Activated CD4-positive, alpha-beta T cell treated with anti-CD3 and anti-CD28 coated beads for 36 hours (primary cell): ENCODE measurements at regions of chr21 and their contacts with region 1.

Region 1: DNA sequence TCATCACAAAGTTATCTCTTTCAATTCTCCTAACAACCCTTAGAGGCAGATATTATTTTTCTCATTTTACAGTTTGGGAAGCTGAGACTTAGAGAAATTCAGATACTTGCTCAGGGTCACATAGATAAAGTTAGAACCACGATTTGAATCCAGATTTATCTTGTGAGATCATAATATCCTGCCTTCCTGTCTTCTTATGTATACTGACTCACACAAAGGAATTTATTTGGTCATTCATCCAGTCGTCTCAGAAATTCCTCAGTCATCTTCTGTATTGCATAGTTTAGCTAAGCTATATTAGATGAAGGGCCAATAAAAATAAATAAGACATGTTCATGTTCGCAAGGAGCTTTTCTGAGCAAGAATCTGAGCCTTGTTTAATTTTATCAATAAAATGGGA is 35.8 kb upstream of the RUNX1 start:
- DNase-seq: no peak
- ATAC-seq: no peak
- H3K4me3 Mint-ChIP-seq: no peak overlapping the region
- H3K27ac Mint-ChIP-seq: no peak overlapping the region
- H3K4me1 Mint-ChIP-seq: peaks cover 44% of the 10 kb centered on the region
- H3K27me3 Mint-ChIP-seq: no peaks in the 10 kb centered on the region

Region 2: DNA sequence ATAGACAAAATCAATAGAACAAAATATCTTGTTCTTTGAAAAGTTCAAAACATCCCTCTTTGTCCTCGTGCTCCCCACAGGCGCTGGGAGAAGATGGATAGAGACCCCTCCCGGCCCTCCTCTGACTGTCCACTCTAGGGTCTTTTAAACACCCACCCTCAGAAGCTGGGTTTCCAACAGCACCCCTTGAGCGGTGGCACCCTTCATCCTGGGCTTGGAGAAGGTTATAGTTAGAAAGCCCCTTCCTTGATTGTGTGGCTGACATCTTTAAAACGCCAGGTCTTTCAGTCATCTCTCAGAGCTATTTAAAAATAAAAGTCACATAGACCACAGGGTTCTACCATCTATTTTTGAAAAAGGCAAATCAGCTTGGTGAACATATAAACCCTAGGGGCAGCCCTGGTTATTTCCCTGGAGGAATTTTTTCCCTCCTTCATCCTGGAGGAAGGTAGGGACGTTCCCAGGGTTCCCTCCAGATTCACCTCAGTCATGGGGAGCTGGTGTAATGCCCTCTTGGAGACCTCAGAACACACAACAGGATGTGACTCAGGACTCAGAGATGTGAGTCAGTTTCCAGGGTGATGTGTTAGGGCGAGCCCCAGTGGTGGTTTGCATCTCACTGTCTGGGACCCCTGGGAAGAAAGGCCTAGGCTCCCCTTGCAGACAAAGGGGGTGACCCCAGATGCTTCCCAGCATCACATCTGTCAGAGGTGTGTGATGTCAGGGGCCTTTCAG is 277.6 kb before region 1 on chr21:
- CTCF ChIA-PET with region 1: interaction called, 3 read pairs
- POLR2A ChIA-PET with region 1: interaction called, 3 read pairs
- intact Hi-C with region 1: loop called in 1 of 2 experiments (anchors 1 kb)
- DNase-seq: peak; percentile 83
- ATAC-seq: peak; percentile 92
- H3K4me3 Mint-ChIP-seq: no peak overlapping the region
- H3K27ac Mint-ChIP-seq: peak overlapping the region; percentile 87
- H3K4me1 Mint-ChIP-seq: peaks cover 90% of the 10 kb centered on the region
- H3K27me3 Mint-ChIP-seq: no peaks in the 10 kb centered on the region

Region 3: DNA sequence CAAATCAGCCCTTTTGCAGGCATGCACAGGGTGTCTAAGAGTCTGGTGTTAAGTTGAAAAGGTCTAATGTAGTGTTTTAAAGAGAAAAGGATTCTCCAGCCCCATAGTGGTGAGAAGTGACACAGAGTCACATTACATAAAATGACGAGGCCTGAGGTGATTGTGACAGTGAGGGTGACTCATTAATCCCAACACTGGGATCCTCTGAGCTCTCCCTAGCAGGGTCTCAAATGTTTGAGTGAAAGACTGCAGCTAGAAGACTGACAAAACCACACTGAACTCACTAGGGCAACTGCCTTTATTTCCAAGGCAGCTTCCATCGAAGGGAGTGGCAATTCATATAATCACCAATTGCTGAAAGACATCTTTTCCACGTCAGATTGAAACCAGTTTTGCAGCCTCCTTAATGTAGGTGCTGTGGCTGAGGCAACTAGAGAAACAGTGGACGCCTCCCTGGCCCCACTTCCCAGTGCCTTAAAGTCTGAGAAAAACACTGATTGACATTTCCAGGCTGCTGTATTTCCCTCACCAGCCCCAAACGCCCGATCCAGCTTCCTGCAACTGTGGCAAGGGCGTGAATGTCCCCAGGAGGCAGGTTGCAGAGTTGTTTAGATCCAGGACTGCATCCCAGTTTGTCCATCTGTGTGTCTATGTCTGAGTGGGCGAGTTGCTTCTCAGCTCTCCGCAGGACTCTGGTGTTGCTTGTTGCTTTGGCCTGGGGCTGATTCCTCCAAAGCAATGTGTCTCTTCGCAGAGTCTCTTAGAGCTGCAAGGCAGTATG is 117.2 kb before region 1 on chr21:
- CTCF ChIA-PET with region 1: no interaction called
- POLR2A ChIA-PET with region 1: interaction called, 7 read pairs
- intact Hi-C with region 1: loop called in 1 of 2 experiments (anchors 1 kb)
- DNase-seq: peak; percentile 73
- ATAC-seq: peak; percentile 70
- H3K4me3 Mint-ChIP-seq: peak overlapping the region; percentile 61
- H3K27ac Mint-ChIP-seq: peak overlapping the region; percentile 99
- H3K4me1 Mint-ChIP-seq: peaks cover 91% of the 10 kb centered on the region
- H3K27me3 Mint-ChIP-seq: no peaks in the 10 kb centered on the region

Region 4: GRCh38 chr21:35138665-35139381 is 54.0 kb after region 1 on chr21:
- CTCF ChIA-PET with region 1: interaction called, 6 read pairs
- POLR2A ChIA-PET with region 1: interaction called, 10 read pairs
- intact Hi-C with region 1: loop called (anchors 1 to 2 kb)
- DNase-seq: peak; percentile 83
- ATAC-seq: peak; percentile 91
- H3K4me3 Mint-ChIP-seq: peak overlapping the region; percentile 65
- H3K27ac Mint-ChIP-seq: peak overlapping the region; percentile 93
- H3K4me1 Mint-ChIP-seq: peaks cover 38% of the 10 kb centered on the region
- H3K27me3 Mint-ChIP-seq: no peaks in the 10 kb centered on the region

Region 5: GRCh38 chr21:35226948-35227744 is 142.3 kb after region 1 on chr21:
- CTCF ChIA-PET with region 1: interaction called, 3 read pairs
- POLR2A ChIA-PET with region 1: no interaction called
- intact Hi-C with region 1: loop called in 1 of 2 experiments (anchors 2 kb)
- DNase-seq: peak; percentile 73
- ATAC-seq: peak; percentile 83
- H3K4me3 Mint-ChIP-seq: peak overlapping the region; percentile 45
- H3K27ac Mint-ChIP-seq: peak overlapping the region; percentile 85
- H3K4me1 Mint-ChIP-seq: peaks cover 37% of the 10 kb centered on the region
- H3K27me3 Mint-ChIP-seq: no peaks in the 10 kb centered on the region

Region 6: DNA sequence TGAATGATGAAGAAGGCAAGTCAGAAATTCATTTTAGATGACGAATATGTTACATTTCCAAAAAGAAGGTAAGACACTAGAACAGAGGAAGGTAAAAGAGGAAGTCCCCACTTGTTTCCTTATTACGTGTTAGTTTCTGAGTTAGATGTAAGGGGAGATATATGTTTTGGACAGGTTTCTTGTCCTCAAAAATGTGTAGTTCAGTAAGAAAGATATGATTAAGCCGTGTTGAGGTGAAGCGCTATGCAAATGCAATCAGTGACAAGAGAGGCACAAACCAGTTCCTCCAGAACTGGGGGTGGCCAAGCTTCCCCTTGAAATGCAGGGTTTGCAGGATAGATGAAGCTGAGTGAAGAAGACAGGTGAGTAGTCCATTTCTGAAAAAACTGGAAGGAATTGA is 257.6 kb after region 1 on chr21:
- CTCF ChIA-PET with region 1: no interaction called
- POLR2A ChIA-PET with region 1: no interaction called
- intact Hi-C with region 1: loop called (anchors 1 to 2 kb)
- DNase-seq: peak; percentile 55
- ATAC-seq: peak; percentile 78
- H3K4me3 Mint-ChIP-seq: peak overlapping the region; percentile 59
- H3K27ac Mint-ChIP-seq: peak overlapping the region; percentile 94
- H3K4me1 Mint-ChIP-seq: peaks cover 39% of the 10 kb centered on the region
- H3K27me3 Mint-ChIP-seq: peaks cover 1% of the 10 kb centered on the region